Activated CD4-positive, alpha-beta T cell treated with anti-CD3 and anti-CD28 coated beads, Interleukin-2, amount 10 ng/mL, durations not matched to agents 24 days and 14 days (primary cell): ENCODE measurements at regions of chr1 and their contacts with region 1.

Region 1: GRCh38 chr1:226407497-226408284 is at the start of gene PARP1:
- DNase-seq: peak; percentile 97
- H3K4me3 Mint-ChIP-seq: peak within 1 kb of the TSS; percentile 100
- H3K27ac Mint-ChIP-seq: peak within 1 kb of the TSS; percentile 98
- H3K4me1 Mint-ChIP-seq: peaks cover 37% of the 10 kb centered on the region
- H3K27me3 Mint-ChIP-seq: peaks cover 8% of the 10 kb centered on the region
- total RNA-seq, gene PARP1: 215 and 222 TPM in 2 replicates

Region 2: GRCh38 chr1:225428068-225428880 is 979.4 kb before region 1 on chr1:
- intact Hi-C with region 1: loop called (anchors 5 kb)
- DNase-seq: peak; percentile 98
- H3K4me3 Mint-ChIP-seq: peak overlapping the region; percentile 90
- H3K27ac Mint-ChIP-seq: peak overlapping the region; percentile 95
- H3K4me1 Mint-ChIP-seq: peaks cover 50% of the 10 kb centered on the region
- H3K27me3 Mint-ChIP-seq: no peaks in the 10 kb centered on the region

Region 3: DNA sequence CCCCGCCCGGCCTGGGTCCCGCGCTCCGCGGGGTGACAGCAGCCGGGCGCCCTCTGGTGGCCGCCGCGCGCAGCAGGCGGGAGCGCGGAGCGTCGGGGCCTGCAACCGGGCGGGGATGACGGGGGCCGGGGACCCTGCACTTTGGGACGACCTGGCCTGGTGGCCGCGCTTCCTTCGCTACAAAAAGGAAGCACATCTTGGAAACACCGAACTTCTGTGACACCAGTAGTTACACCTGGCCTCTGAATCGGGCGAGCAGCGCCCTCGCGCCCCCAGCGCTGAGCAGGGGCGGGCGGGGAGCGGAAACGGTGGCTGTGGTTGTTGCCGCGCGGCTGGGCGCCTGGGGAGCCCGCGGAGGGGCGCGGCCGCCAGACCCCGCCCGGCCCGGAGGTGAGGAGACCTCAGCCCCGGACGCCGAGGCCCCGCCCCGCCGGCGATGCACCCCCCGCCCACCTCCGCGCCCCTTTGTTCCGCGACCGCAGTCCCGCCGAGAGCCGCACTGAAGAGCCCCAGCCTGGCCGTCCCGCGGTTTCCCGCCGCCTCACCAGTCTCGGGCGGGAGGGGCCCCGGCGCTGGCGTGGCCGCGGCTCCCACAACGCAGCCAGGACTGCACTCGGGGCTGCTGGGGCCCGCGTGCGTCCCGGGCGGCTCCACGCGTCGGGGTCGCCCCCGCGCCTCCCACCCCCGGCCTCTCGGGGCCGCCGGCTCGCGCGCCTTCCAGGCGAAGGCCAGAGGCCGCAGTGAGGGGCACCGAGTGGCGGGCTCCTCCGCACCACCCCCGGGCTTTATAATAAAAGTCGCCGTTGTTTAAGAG is 285.9 kb before region 1 on chr1:
- intact Hi-C with region 1: loop called (anchors 5 kb)
- DNase-seq: peak; percentile 94
- H3K4me3 Mint-ChIP-seq: peak overlapping the region; percentile 80
- H3K27ac Mint-ChIP-seq: peak overlapping the region; percentile 75
- H3K4me1 Mint-ChIP-seq: peaks cover 22% of the 10 kb centered on the region
- H3K27me3 Mint-ChIP-seq: peaks cover 3% of the 10 kb centered on the region

Region 4: GRCh38 chr1:226308723-226309315 is 98.9 kb before region 1 on chr1 and contains the start of gene LIN9:
- intact Hi-C with region 1: loop called (anchors 5 kb)
- DNase-seq: peak; percentile 98
- H3K4me3 Mint-ChIP-seq: peak within 1 kb of the TSS; percentile 91
- H3K27ac Mint-ChIP-seq: peak within 1 kb of the TSS; percentile 89
- H3K4me1 Mint-ChIP-seq: peaks cover 31% of the 10 kb centered on the region
- H3K27me3 Mint-ChIP-seq: peaks cover 20% of the 10 kb centered on the region
- total RNA-seq, gene LIN9: 10.5 and 13.8 TPM in 2 replicates

Region 5: DNA sequence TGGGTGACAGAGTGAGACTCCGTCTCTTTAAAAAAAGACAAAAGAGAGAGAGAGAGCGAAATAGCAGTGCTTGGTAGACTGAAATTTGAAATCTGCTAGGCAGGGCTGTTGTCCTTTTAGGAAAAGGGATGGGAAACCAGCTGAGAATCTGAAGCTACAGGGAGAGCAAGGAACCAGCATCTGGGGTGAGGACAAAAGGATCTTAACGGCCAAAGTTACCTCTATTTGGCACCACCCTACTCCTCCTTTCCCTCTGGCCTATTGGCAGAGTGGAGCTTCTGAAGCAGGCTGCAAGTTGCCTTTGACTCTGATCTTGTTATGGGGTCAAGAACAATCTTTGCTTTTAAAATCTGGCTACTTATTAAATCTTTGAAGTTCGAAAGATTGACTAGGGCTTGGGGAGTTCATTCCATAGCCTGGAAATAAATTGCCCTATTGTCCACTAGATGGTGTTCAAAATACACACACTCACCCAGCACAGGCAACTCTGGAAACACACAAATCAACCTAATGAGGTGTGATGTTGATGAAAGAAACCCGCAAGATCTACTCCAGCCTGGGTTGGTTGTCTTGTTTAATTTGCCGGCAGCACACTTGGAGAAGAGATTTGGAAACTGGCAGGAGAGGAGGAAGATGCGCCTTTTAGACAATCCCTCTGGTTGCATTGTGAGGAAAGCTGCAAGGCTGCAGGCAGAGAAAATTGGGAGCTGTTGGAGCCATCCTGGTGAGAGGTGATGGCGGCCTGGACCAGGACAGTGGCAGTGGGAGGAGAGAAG is 16.7 kb after region 1 on chr1:
- intact Hi-C with region 1: loop called (anchors 1 kb)
- DNase-seq: peak; percentile 71
- H3K4me3 Mint-ChIP-seq: no peak overlapping the region
- H3K27ac Mint-ChIP-seq: no peak overlapping the region
- H3K4me1 Mint-ChIP-seq: peaks cover 12% of the 10 kb centered on the region
- H3K27me3 Mint-ChIP-seq: peaks cover 15% of the 10 kb centered on the region

Region 6: GRCh38 chr1:226662642-226663326 is 255.1 kb after region 1 on chr1:
- intact Hi-C with region 1: loop called (anchors 5 kb)
- DNase-seq: peak; percentile 92
- H3K4me3 Mint-ChIP-seq: peak overlapping the region; percentile 69
- H3K27ac Mint-ChIP-seq: peak overlapping the region; percentile 81
- H3K4me1 Mint-ChIP-seq: peaks cover 79% of the 10 kb centered on the region
- H3K27me3 Mint-ChIP-seq: no peaks in the 10 kb centered on the region

Region 7: GRCh38 chr1:228082135-228082891 is 1674.6 kb after region 1 on chr1 and contains the start of gene ARF1:
- intact Hi-C with region 1: loop called (anchors 10 kb)
- DNase-seq: peak; percentile 98
- H3K4me3 Mint-ChIP-seq: peak within 1 kb of the TSS; percentile 97
- H3K27ac Mint-ChIP-seq: peak within 1 kb of the TSS; percentile 93
- H3K4me1 Mint-ChIP-seq: peaks cover 39% of the 10 kb centered on the region
- H3K27me3 Mint-ChIP-seq: no peaks in the 10 kb centered on the region
- total RNA-seq, gene ARF1: 388 and 395 TPM in 2 replicates